AG04450 (cell line): ENCODE measurements at regions of chr2 and their contacts with region 1.

Region 1: DNA sequence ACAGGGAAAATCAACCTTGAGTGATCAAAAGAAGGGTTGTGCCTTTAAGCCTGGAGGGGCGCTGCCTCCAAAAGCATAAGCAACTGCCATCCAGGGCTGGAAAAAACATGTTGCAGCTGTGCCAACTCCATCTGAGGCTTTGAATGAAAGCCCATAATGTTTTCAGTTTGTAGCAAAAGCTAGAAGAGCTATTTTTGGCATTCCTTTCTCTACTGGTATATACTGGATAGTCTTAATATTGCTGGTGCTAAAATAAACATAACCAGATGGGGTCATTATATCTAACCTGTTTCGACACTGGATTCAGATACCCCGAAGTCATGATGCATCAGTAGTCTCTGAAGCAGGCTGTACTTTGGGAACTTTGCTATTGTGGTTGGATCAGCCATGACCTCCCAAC is 25.1 kb downstream of the ANXA4 start:
- DNase-seq: peak; percentile 79
- H3K4me3 ChIP-seq: no peak overlapping the region; the same call in 1 of the 2 replicates
- H3K27ac ChIP-seq: peak overlapping the region; percentile 93
- H3K27me3 ChIP-seq: no peaks in the 10 kb centered on the region
- CTCF ChIP-seq: peak; percentile 46

Region 2: GRCh38 chr2:69741619-69742466 is 25.2 kb before region 1 on chr2 and contains the start of gene ANXA4:
- CTCF ChIA-PET with region 1: interaction called, 5 read pairs
- POLR2A ChIA-PET with region 1: interaction called, 15 read pairs
- DNase-seq: peak; percentile 45
- H3K4me3 ChIP-seq: peak within 1 kb of the TSS; percentile 73
- H3K27ac ChIP-seq: peak within 1 kb of the TSS; percentile 95
- H3K27me3 ChIP-seq: no peaks in the 10 kb centered on the region
- CTCF ChIP-seq: no peak
- polyA plus RNA-seq, gene ANXA4: 105 and 125 TPM in 2 replicates

Region 3: DNA sequence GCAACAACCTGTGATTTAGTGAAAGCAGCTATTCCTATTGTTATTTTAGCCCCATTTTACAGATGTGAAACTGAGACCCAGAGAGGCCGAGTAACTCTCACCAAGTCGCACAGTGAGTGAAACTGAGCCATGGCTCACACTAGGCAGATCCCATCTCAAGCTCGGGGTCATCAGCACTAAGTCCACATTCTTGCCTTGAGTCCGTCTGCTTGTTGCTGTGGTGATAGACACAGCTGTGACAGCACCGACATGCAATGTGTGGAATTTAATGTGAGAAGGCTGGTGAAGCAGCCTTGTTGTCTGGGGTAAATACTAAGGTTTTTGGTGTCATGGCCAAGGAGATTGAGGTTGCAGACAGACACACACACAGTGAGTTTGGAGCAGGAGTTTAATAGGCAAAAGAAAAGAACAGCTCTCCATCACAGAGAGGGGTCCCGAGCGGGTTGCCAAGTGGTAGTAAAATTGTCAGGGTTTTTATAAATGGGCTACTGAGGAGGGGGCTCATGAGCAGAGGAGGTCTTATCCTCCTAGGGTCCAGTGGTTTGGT is 22.2 kb after region 1 on chr2:
- CTCF ChIA-PET with region 1: interaction called, 5 read pairs
- POLR2A ChIA-PET with region 1: interaction called, 12 read pairs
- DNase-seq: peak; percentile 62
- H3K4me3 ChIP-seq: no peak overlapping the region
- H3K27ac ChIP-seq: peak overlapping the region; percentile 47
- H3K27me3 ChIP-seq: no peaks in the 10 kb centered on the region
- CTCF ChIP-seq: no peak